Activated CD4-positive, alpha-beta memory T cell treated with anti-CD3 and anti-CD28 coated beads for 36 hours (primary cell): ENCODE measurements at regions of chr2 and their contacts with region 1.

Region 1: GRCh38 chr2:35790292-35790691 is 565.3 kb upstream of the CRIM1 start:
- DNase-seq: no peak
- H3K4me3 Mint-ChIP-seq: no peak overlapping the region
- H3K27ac Mint-ChIP-seq: no peak overlapping the region
- H3K4me1 Mint-ChIP-seq: no peaks in the 10 kb centered on the region
- H3K27me3 Mint-ChIP-seq: peaks cover 1% of the 10 kb centered on the region

Region 2: DNA sequence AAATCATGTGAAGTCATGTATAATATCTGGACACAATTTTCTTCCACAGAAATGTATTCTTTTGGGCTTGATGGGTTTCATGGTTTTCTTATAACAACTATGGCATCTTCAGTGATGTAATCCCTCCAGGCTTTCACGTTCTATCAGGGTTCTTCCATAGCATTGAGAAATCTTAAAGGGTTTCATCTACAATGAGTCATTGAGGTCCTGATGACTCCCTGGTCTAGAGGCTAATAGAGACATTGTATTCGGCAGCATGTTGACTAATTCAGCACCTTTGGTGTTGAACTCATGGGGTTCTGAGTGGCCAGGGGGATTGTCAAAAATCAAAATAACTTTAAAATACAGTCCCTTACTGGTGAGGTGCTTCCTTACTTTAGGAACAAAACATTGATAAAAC is 48.7 kb before region 1 on chr2:
- CTCF ChIA-PET with region 1: no interaction called
- POLR2A ChIA-PET with region 1: no interaction called
- intact Hi-C with region 1: loop called (anchors 5 kb)
- DNase-seq: no peak
- H3K4me3 Mint-ChIP-seq: no peak overlapping the region
- H3K27ac Mint-ChIP-seq: no peak overlapping the region
- H3K4me1 Mint-ChIP-seq: no peaks in the 10 kb centered on the region
- H3K27me3 Mint-ChIP-seq: no peaks in the 10 kb centered on the region